ENCODE measurements at regions of chr1 and their contacts with region 1.

Region 1: DNA sequence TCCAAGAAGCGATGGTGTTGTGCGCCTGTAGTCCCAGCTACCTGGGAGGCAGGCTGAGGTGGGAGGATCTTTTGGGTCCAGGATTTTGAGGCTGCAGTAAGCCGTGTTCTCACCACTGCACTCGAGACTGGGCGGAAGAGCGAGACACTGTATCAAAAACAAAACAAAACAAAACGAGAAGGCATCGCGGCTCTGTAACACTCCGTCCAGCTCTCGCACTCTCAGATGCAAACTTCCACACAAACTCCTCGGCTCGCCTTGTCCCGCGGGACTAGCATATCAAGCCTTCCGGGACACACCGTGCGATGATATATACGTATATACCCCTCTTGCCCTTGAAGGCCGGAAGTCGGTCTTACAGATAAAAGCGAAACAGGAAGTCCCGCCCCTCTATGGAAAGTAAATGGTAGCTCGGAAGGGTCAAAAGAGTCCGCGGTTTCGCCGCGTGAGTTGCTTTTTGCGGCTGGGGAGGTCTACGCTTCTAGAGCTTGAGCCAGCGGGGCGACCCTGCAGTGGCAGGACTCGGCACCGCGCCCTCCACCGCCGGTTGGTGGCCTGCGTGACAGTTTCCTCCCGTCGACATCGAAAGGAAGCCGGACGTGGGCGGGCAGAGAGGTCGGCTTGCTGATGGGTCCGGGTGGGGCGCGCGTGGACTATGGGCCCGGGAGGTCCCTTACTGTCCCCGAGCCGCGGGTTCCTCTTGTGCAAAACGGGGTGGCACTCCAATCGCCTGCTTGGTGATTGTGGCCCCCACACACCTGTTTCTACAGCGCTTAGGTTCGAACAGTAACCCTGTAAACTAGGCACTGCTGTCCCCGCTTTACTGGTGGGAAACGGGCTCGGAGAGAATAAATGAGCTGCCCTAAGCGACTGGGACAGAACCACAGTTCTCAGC is at the start of gene COA6:
- H3K4me3 ChIP-seq: peak within 1 kb of the TSS; percentile 95
- H3K27ac ChIP-seq: peak within 1 kb of the TSS; percentile 85
- H3K4me1 ChIP-seq: no peaks in the 10 kb centered on the region
- CTCF ChIP-seq: peak; percentile 89

Region 2: DNA sequence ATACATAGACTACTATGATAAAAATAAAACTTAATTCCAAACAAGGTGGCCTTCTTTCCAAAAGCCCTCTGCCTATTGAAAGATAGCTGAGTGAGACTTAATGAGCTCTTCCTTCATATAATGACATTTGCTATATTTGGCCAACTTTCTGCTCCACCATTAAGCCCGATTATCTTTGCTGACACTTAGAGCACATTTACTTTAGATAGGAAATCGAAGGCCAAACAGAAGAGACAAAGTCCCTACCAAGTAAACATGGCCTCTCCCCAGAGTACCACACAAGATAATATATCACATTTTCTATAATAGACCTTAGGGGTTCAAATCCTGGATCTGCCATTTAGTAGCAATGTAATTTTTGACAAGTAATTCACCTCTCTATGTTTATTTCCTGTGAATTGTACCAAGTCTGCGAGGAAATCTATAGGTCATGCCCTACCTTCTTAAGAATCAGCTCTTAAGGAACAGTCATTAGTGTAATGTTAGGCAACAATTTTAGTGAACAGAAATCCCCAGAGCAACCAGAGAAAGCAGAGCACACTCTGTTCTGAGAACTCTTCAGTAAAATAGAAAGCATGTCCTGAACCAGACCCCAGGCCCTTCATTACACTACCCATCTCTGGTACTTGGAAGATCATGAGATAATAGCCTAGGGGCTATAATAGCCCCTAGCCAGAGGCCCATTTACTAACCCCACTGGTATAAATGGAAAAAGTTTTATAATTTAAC is 17.4 kb before region 1 on chr1:
- CTCF ChIA-PET with region 1: no interaction called
- POLR2A ChIA-PET with region 1: interaction called, 13 read pairs
- H3K4me3 ChIP-seq: no peak overlapping the region
- H3K27ac ChIP-seq: no peak overlapping the region
- H3K4me1 ChIP-seq: no peaks in the 10 kb centered on the region
- CTCF ChIP-seq: no peak

Region 3: GRCh38 chr1:234362558-234362957 is 10.8 kb before region 1 on chr1:
- CTCF ChIA-PET with region 1: no interaction called
- POLR2A ChIA-PET with region 1: interaction called, 10 read pairs
- H3K4me3 ChIP-seq: no peak overlapping the region
- H3K27ac ChIP-seq: no peak overlapping the region
- H3K4me1 ChIP-seq: no peaks in the 10 kb centered on the region
- CTCF ChIP-seq: no peak

Region 4: GRCh38 chr1:234386122-234386521 is 12.8 kb after region 1 on chr1:
- CTCF ChIA-PET with region 1: interaction called, 4 read pairs
- POLR2A ChIA-PET with region 1: interaction called, 16 read pairs
- H3K4me3 ChIP-seq: no peak overlapping the region
- H3K27ac ChIP-seq: no peak overlapping the region
- H3K4me1 ChIP-seq: no peaks in the 10 kb centered on the region
- CTCF ChIP-seq: no peak

Region 5: DNA sequence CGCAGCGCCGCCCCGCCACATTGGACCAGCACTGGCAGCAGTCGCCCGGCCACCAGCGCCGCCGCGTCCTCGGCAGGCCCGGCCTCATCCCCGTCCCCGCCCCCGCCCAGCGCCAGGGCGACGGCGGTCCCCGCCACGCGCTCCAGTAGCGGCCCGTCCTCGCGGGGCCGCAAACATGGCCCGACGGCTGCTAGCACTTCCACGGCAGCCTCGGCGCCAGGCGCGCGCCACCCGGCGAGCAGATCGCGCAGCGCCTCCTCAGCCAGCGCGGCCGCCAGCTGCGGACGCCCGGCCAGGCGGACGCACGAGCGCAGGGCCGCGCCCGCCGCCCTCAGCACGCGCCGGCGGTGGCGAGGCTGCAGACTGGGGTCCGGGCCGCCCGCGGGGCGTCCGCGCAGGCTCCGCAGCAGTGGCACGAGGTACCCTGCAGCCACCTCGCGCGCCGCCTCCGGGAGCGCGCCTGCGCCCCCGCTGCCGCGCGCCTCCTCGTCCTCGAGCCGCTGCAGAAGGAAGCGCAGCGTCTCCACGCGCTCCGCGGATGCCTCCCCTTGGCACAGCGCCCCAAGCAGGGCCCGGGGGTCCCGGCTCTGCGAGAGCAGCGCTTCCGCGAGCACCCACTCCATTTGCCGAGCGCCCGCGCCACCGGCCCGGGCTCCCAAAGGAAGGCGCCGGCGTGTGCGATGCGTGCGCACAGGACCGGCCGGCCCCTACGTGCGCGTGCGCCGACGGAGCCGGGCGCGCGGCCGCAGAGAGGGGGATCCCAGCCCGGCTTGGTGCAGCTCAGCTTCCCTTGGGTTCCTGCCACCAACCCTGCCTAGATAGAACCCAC is 105.4 kb after region 1 on chr1 and contains the start of gene TARBP1:
- CTCF ChIA-PET with region 1: no interaction called
- POLR2A ChIA-PET with region 1: interaction called, 13 read pairs
- H3K4me3 ChIP-seq: peak within 1 kb of the TSS; percentile 81
- H3K27ac ChIP-seq: peak within 1 kb of the TSS; percentile 88
- H3K4me1 ChIP-seq: peaks cover 26% of the 10 kb centered on the region
- CTCF ChIP-seq: peak; percentile 59; the same call in 1 of the 2 replicates